HepG2 (cell line): ENCODE measurements at regions of chr2 and their contacts with region 1.

Region 1: GRCh38 chr2:67159929-67160328 is 237.2 kb upstream of the ETAA1 start:
- DNase-seq: no peak
- ATAC-seq: no peak
- H3K4me3 ChIP-seq: no peak overlapping the region
- H3K27ac ChIP-seq: no peak overlapping the region
- H3K4me1 ChIP-seq: no peaks in the 10 kb centered on the region
- H3K27me3 ChIP-seq: no peaks in the 10 kb centered on the region
- CTCF ChIP-seq: no peak
- EP300 ChIP-seq: no peak
- POLR2A ChIP-seq: no peak
- RAD21 ChIP-seq: no peak

Region 2: GRCh38 chr2:67108231-67108630 is 51.7 kb before region 1 on chr2:
- CTCF ChIA-PET with region 1: no interaction called
- POLR2A ChIA-PET with region 1: no interaction called
- in situ Hi-C with region 1: no loop called
- intact Hi-C with region 1: loop called (anchors 2 kb)
- DNase-seq: no peak
- ATAC-seq: no peak
- H3K4me3 ChIP-seq: no peak overlapping the region
- H3K27ac ChIP-seq: no peak overlapping the region
- H3K4me1 ChIP-seq: no peaks in the 10 kb centered on the region
- H3K27me3 ChIP-seq: no peaks in the 10 kb centered on the region
- CTCF ChIP-seq: no peak
- EP300 ChIP-seq: no peak
- POLR2A ChIP-seq: no peak
- RAD21 ChIP-seq: no peak